Activated CD4-positive, alpha-beta T cell treated with anti-CD3 and anti-CD28 coated beads for 36 hours (primary cell): ENCODE measurements at regions of chr4 and their contacts with region 1.

Region 1: DNA sequence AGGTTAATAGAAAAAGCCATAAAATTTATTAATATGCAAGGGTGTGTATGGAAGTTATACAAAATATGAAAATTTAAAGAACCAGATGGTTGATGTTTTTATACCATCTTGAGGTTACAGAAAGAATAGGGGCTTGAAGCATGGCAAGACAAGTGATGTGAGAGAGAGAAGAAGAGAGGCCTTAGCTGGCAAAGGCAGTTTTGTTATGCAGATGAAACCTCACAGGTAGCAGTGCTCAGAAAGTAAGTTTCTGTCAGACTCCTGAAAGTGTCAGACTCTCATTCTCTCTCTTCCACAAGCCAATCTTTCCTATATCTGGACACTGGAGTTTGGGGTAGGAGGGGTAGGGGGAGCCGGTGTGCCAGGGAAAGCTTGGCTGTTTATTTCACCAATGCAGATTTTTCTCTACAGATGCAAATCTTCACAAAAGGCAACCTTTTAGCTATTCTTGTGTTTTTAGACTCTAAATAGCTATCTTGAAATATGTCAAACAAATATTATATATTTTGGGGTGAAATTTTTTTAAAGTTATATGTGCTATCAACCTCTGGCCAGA is 124.5 kb downstream of the CFAP299 start:
- DNase-seq: no peak
- ATAC-seq: no peak
- H3K4me3 Mint-ChIP-seq: no peak overlapping the region
- H3K27ac Mint-ChIP-seq: no peak overlapping the region
- H3K4me1 Mint-ChIP-seq: peaks cover 18% of the 10 kb centered on the region
- H3K27me3 Mint-ChIP-seq: no peaks in the 10 kb centered on the region

Region 2: DNA sequence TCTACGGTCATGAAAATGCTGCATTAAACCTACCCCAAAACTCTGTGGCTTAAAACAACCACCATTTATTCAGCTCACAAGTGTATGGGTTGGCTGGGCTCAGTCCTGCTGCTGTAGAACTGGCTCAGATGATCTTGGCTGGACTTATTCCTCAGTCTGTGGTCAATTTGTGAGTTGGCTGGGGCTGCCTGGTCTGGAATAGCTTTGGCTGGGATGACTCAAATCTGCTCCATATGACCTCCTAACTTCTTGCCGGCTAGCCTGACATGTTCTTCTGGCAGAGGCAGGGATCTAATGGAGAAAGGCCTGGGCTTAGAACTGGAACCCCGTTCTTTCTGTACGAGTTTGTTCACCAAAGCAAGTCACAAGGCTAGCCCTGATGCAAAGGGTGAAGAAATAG is 52.8 kb before region 1 on chr4:
- CTCF ChIA-PET with region 1: no interaction called
- POLR2A ChIA-PET with region 1: no interaction called
- intact Hi-C with region 1: loop called in 1 of 2 experiments (anchors 5 kb)
- DNase-seq: no peak
- ATAC-seq: no peak
- H3K4me3 Mint-ChIP-seq: no peak overlapping the region
- H3K27ac Mint-ChIP-seq: no peak overlapping the region
- H3K4me1 Mint-ChIP-seq: no peaks in the 10 kb centered on the region
- H3K27me3 Mint-ChIP-seq: no peaks in the 10 kb centered on the region